Heart right ventricle (tissue), 16 donors: ENCODE measurements at regions of chr10 and their contacts with region 1.

Region 1: DNA sequence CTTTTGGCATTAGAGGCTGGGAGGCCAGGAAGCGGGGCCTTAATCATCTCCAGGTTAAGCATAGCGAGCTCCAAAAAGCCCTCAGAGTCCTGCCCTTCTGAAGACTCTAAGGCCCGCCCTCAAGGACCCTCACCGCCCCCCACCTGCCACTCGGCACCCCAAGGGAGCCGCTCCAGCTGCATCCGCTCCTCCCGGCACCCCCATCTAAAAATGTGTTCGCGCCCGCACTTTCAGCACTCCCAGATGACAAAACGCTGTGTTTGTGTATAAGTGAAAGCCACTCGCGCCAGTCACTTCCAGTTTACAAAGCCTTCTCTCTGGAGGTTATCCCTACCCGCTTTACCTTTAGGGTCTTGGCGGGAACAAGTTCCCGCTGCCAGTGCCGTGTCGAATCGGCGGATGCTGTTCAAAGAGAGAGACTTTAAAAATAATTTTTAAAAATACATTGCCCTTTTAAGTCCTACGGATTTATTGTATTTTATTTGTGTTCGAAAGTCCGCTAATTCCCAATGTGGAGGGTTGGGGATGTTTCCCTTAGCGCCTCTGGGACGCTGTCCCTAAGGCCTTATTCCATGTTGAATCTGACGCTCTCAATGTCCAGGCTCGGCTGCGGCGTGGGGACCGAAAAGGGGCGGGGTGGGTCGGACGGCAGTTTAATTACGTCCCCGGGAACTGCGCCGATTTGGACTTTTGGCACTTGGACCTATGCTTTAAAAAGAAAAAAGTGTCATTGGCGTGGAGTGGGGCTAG is at the starts of genes DCLRE1A and NHLRC2:
- DNase-seq: peak; percentile 78 to 85
- ATAC-seq: peak; percentile 84 to 94 (median 88)
- H3K4me3 ChIP-seq: peak within 1 kb of the TSS; percentile 74 to 99 (median 90)
- H3K27ac ChIP-seq: peak within 1 kb of the TSS; percentile 81 to 97 (median 96)
- H3K4me1 ChIP-seq: peaks cover 0 to 66% (median 51%) of the 10 kb centered on the region in 9 donors
- H3K27me3 ChIP-seq: no peaks in the 10 kb centered on the region
- CTCF ChIP-seq: no peak
- total RNA-seq, gene DCLRE1A: 4.6 to 7.5 (median 5.7) TPM
- total RNA-seq, gene NHLRC2: 58.0 to 98.0 (median 72.0) TPM

Region 2: GRCh38 chr10:113385021-113385999 is 468.9 kb before region 1 on chr10:
- intact Hi-C with region 1: no loop called
- DNase-seq: peak; percentile 78 to 87
- ATAC-seq: peak; percentile 95 to 98 (median 97)
- H3K4me3 ChIP-seq: peak overlapping the region in 1 of 10 donors; percentile 29
- H3K27ac ChIP-seq: peak overlapping the region in 6 of 10 donors; percentile 5 to 61 (median 26)
- H3K4me1 ChIP-seq: peaks cover 0 to 38% (median 24%) of the 10 kb centered on the region in 9 donors
- H3K27me3 ChIP-seq: peaks cover 0 to 6% (median 0%) of the 10 kb centered on the region in 7 donors
- CTCF ChIP-seq: peak; percentile 61 to 94 (median 86)

Region 3: GRCh38 chr10:113842171-113842570 is 12.0 kb before region 1 on chr10:
- intact Hi-C with region 1: loop called in 1 of 10 experiments (anchors 1 kb)
- DNase-seq: no peak
- ATAC-seq: no peak
- H3K4me3 ChIP-seq: no peak overlapping the region
- H3K27ac ChIP-seq: no peak overlapping the region
- H3K4me1 ChIP-seq: peaks cover 0 to 7% (median 0%) of the 10 kb centered on the region in 9 donors
- H3K27me3 ChIP-seq: no peaks in the 10 kb centered on the region
- CTCF ChIP-seq: no peak

Region 4: DNA sequence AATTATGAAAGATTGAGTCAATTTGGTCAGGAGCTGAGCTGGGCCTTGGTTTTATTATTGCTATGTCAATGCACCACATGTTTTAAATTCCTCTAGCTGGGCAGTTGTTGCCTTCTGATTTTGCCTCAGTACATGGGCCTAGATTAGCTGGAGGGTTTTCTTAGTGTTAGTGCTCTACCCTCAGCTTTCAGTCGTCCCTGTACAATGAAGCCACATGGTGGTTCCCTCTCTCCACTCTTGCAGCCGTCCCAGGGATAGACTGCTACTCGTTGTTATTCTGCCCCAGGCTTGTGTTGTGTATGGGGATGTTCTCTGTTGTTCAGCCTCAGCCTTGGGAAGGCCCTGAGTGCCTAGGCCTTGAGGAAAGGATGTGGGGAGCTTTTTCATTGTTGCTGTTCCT is 37.3 kb after region 1 on chr10:
- intact Hi-C with region 1: loop called in 1 of 10 experiments (anchors 5 kb)
- DNase-seq: peak in 1 of 2 donors; percentile 13
- ATAC-seq: peak; percentile 53 to 93 (median 86)
- H3K4me3 ChIP-seq: no peak overlapping the region
- H3K27ac ChIP-seq: peak overlapping the region in 6 of 10 donors; percentile 9 to 72 (median 59)
- H3K4me1 ChIP-seq: peaks cover 0 to 51% (median 22%) of the 10 kb centered on the region in 9 donors
- H3K27me3 ChIP-seq: no peaks in the 10 kb centered on the region
- CTCF ChIP-seq: peak in 2 of 9 donors; percentile 38 to 39

Region 5: DNA sequence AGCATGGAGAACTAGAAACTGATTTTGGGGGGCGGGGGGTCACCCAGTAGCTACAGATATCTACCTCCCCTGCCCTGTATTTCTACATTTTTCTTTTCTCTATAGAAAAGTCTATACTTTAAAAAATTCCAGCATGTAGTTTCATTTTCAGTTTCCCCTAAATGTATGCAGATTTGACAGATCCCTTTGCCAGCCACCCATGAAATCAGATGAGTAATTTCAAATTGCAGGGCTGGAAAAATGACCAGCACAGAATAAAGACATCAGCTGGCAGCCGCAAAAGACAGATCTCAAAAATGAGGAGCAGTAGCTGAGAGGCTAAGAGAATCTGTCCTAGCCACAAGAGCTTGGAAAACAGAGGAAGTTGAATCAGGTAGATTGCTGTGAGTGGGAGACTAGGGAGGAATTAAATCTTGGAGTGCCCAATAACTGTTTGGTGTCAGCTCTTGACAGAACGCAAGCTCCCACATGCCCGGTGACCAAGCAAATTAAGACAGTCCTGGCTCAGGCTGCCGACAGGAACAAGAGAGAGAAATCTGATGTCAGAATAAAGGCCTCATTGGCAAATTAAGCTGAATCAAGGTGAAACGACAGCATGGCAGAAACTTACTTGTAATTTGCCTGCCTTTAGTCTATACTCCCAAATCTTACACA is 214.0 kb after region 1 on chr10:
- intact Hi-C with region 1: loop called in 1 of 10 experiments (anchors 5 kb)
- DNase-seq: peak in 1 of 2 donors; percentile 19
- ATAC-seq: peak in 2 of 8 donors; percentile 33 to 44
- H3K4me3 ChIP-seq: no peak overlapping the region
- H3K27ac ChIP-seq: peak overlapping the region in 9 of 10 donors; percentile 48 to 87 (median 79)
- H3K4me1 ChIP-seq: peaks cover 4 to 57% (median 38%) of the 10 kb centered on the region in 9 donors
- H3K27me3 ChIP-seq: no peaks in the 10 kb centered on the region
- CTCF ChIP-seq: no peak